ENCODE measurements at regions of chr3 and their contacts with region 1.

Region 1: DNA sequence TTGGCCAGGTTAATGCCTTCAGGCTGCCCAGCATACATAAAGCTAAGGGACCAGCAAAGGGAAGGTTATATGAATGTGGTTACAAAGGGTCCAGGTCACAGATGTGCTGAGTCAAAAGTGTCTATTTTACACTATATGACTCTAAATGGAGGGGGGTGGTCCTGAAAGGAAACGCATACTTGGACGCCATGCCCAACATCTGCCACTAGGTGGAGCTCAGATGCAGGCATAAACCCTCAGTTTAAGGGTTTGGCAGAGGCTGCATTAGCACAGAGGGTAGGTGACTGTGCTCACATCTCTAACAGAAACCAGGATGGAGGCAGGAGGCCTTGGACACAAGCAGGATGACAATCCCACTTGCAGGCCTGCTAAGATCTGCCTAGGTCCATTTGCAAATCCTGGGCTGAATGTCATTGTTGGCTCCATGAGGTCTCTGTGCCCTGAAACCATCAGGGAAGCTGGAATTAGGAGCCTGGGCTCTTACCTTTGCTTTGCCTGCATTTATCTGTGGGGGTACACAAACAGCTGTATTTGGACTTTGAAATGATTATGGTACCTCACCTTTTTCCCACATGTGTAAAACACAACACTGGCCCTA is 55.8 kb downstream of the ZNF621 start:
- DNase-seq: peak; percentile 71
- ATAC-seq: peak; percentile 72
- H3K4me3 Mint-ChIP-seq: no peak overlapping the region
- H3K27ac Mint-ChIP-seq: no peak overlapping the region
- H3K4me1 Mint-ChIP-seq: no peaks in the 10 kb centered on the region
- H3K27me3 Mint-ChIP-seq: peaks cover 5% of the 10 kb centered on the region

Region 2: GRCh38 chr3:40694326-40694725 is 113.7 kb after region 1 on chr3:
- CTCF ChIA-PET with region 1: no interaction called
- POLR2A ChIA-PET with region 1: no interaction called
- DNase-seq: no peak
- ATAC-seq: no peak
- H3K4me3 Mint-ChIP-seq: no peak overlapping the region
- H3K27ac Mint-ChIP-seq: no peak overlapping the region
- H3K4me1 Mint-ChIP-seq: no peaks in the 10 kb centered on the region
- H3K27me3 Mint-ChIP-seq: peaks cover 19% of the 10 kb centered on the region

Region 3: GRCh38 chr3:41881233-41881821 is 1300.7 kb after region 1 on chr3:
- CTCF ChIA-PET with region 1: interaction called, 20 read pairs
- POLR2A ChIA-PET with region 1: no interaction called
- DNase-seq: no peak
- ATAC-seq: no peak
- H3K4me3 Mint-ChIP-seq: no peak overlapping the region
- H3K27ac Mint-ChIP-seq: no peak overlapping the region
- H3K4me1 Mint-ChIP-seq: no peaks in the 10 kb centered on the region
- H3K27me3 Mint-ChIP-seq: no peaks in the 10 kb centered on the region

Measured in activated CD8-positive, alpha-beta T cell treated with anti-CD3 and anti-CD28 coated beads, Interleukin-2, amount 10 ng/mL, durations not matched to agents 7 days and 5 days (primary cell).